ENCODE measurements at regions of chr2 and their contacts with region 1.

Region 1: DNA sequence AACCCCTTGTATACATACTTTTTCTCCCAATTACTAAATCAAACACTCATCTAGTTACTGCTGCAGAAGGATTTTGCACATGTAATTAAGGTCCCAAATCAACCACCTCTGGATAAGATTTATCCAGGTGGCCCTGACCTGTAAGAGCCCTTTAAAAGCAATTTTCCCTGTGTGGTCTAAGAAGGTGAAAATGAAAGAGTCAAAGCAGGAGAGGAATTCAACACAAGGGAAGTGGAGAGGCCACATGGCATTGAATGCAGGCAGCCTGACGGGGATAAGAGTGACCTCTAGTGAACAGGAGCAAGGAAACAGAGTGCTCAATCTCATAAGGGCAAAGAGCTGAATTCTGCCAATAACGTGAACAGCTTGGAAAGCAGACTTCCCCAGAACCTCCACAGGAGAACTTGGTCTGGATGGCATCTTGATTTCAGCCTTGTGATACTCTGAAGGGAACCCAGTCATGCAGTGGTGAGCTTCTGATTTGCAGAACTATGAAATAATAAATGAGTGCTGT is 27.2 kb downstream of the PPP3R1 start:
- DNase-seq: peak; percentile 26
- ATAC-seq: peak; percentile 94
- H3K4me3 ChIP-seq: no peak overlapping the region
- H3K27ac ChIP-seq: peak overlapping the region; percentile 14; the same call in 1 of the 2 replicates
- H3K4me1 ChIP-seq: peaks cover 5% of the 10 kb centered on the region; the same call in 1 of the 2 replicates
- H3K27me3 ChIP-seq: no peaks in the 10 kb centered on the region
- CTCF ChIP-seq: peak; percentile 44 to 79 (median 49); a peak in 5 of 6 replicates
- EP300 ChIP-seq: no peak
- POLR2A ChIP-seq: no peak
- RAD21 ChIP-seq: peak; percentile 71

Region 2: DNA sequence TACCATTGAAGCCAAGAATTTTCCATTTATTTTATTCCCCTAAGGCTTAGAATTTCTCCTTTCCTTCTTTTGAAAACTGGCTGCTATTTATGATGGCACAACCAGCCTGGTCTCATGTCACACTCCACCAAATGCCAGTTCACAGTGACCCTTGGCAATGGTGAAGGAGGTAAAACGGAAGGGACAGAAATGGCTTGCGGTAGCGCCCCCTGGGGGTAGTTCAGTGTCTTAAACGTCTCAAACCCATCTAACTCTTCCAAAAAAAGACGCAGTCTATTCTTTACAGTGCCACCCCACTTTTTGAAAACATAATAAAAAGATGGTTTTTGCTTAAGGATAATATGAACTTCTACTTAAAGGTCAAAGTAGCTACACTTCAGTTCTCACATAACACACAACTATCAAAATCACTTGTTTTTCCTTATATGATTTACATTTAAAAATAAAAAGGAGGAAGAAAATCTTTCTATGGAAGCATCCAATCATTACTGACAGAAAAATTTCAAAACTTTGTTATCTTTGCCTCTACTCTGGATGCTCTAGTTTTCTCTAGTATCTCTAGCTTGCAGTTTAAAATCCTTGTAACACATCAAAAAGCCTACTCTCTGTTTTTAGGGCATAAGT is 39.5 kb before region 1 on chr2:
- CTCF ChIA-PET with region 1: interaction called, 13 read pairs
- POLR2A ChIA-PET with region 1: no interaction called
- RAD21 ChIA-PET with region 1: no interaction called
- SMC1A ChIA-PET with region 1: interaction called, 4 read pairs
- in situ Hi-C with region 1: no loop called
- intact Hi-C with region 1: no loop called
- DNase-seq: peak; percentile 28
- ATAC-seq: peak; percentile 94
- H3K4me3 ChIP-seq: no peak overlapping the region
- H3K27ac ChIP-seq: no peak overlapping the region; the same call in 1 of the 2 replicates
- H3K4me1 ChIP-seq: no peaks in the 10 kb centered on the region
- H3K27me3 ChIP-seq: no peaks in the 10 kb centered on the region
- CTCF ChIP-seq: peak; percentile 55 to 80 (median 80)
- EP300 ChIP-seq: no peak
- POLR2A ChIP-seq: no peak
- RAD21 ChIP-seq: peak; percentile 49

Region 3: GRCh38 chr2:68237404-68237803 is 12.2 kb after region 1 on chr2:
- CTCF ChIA-PET with region 1: interaction called, 12 read pairs
- POLR2A ChIA-PET with region 1: interaction called, 3 read pairs
- RAD21 ChIA-PET with region 1: interaction called, 3 read pairs
- SMC1A ChIA-PET with region 1: interaction called, 11 read pairs
- in situ Hi-C with region 1: no loop called
- intact Hi-C with region 1: no loop called
- DNase-seq: no peak
- ATAC-seq: no peak
- H3K4me3 ChIP-seq: no peak overlapping the region
- H3K27ac ChIP-seq: no peak overlapping the region
- H3K4me1 ChIP-seq: peaks cover 3% of the 10 kb centered on the region
- H3K27me3 ChIP-seq: no peaks in the 10 kb centered on the region
- CTCF ChIP-seq: no peak
- EP300 ChIP-seq: no peak
- POLR2A ChIP-seq: no peak
- RAD21 ChIP-seq: no peak